Mammary epithelial cell (primary cell): ENCODE measurements at regions of chr3 and their contacts with region 1.

Region 1: DNA sequence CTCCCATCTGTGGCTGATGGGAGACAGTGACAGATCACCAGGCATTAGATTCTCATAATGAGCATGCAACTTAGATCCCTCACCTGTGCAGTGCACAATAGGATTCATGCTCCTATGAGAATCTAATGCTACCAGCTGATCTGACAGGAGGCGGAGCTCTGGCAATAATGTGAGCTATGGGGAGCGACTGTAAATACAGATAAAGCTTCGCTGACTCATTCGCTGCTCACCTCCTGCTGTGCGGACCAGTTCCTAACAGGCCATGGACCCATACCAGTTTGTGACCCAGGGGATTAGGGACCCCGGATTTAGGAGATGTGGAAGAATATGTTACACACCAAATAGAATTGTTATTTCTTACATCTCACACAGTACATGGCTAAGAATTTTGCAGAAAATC is 6.7 kb downstream of the ARGFX start:
- DNase-seq: peak; percentile 42
- H3K4me3 ChIP-seq: no peak overlapping the region
- H3K27ac ChIP-seq: no peak overlapping the region
- H3K4me1 ChIP-seq: no peaks in the 10 kb centered on the region
- H3K27me3 ChIP-seq: no peaks in the 10 kb centered on the region
- CTCF ChIP-seq: no peak

Region 2: DNA sequence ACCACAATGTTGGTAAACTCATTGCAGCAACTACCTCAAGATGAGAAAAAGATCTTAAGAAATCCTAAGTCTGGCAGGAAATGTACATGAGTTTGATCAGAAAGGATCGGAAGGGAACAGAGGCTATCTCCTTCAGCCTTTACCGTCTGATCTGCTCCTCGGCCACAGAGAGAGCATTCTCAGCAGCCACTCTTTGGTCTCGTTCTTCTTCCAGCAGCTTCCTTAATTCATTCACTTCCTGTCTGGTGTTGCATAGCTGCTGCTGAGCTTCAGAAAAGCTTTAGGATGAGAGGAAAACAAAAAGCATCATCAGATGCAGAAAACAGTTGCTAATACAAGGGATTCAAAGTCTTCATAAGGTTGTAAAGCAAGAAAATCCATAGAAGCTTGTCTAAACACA is 92.9 kb after region 1 on chr3:
- CTCF ChIA-PET with region 1: no interaction called
- dilution Hi-C with region 1: loop called (anchors 5 kb)
- in situ Hi-C with region 1: no loop called
- intact Hi-C with region 1: no loop called
- DNase-seq: no peak
- H3K4me3 ChIP-seq: no peak overlapping the region
- H3K27ac ChIP-seq: no peak overlapping the region
- H3K4me1 ChIP-seq: no peaks in the 10 kb centered on the region
- H3K27me3 ChIP-seq: no peaks in the 10 kb centered on the region
- CTCF ChIP-seq: no peak

Region 3: GRCh38 chr3:121707531-121708273 is 133.3 kb after region 1 on chr3:
- CTCF ChIA-PET with region 1: no interaction called
- dilution Hi-C with region 1: no loop called
- in situ Hi-C with region 1: no loop called
- intact Hi-C with region 1: no loop called
- DNase-seq: no peak
- H3K4me3 ChIP-seq: no peak overlapping the region
- H3K27ac ChIP-seq: no peak overlapping the region
- H3K4me1 ChIP-seq: no peaks in the 10 kb centered on the region
- H3K27me3 ChIP-seq: no peaks in the 10 kb centered on the region
- CTCF ChIP-seq: no peak

Region 4: GRCh38 chr3:121871430-121871829 is 297.0 kb after region 1 on chr3:
- CTCF ChIA-PET with region 1: no interaction called
- dilution Hi-C with region 1: no loop called
- in situ Hi-C with region 1: no loop called
- intact Hi-C with region 1: no loop called
- DNase-seq: no peak
- H3K4me3 ChIP-seq: no peak overlapping the region
- H3K27ac ChIP-seq: no peak overlapping the region
- H3K4me1 ChIP-seq: no peaks in the 10 kb centered on the region
- H3K27me3 ChIP-seq: no peaks in the 10 kb centered on the region
- CTCF ChIP-seq: no peak